ENCODE measurements at regions of chr1 and their contacts with region 1.

Region 1: GRCh38 chr1:110393691-110394564 is 3.1 kb upstream of the SLC16A4 start:
- DNase-seq: peak; percentile 66
- H3K4me3 ChIP-seq: no peak overlapping the region
- H3K27me3 ChIP-seq: no peaks in the 10 kb centered on the region
- CTCF ChIP-seq: no peak

Region 2: GRCh38 chr1:110293601-110294104 is 100.3 kb before region 1 on chr1:
- CTCF ChIA-PET with region 1: no interaction called
- POLR2A ChIA-PET with region 1: no interaction called
- DNase-seq: no peak
- H3K4me3 ChIP-seq: no peak overlapping the region
- H3K27me3 ChIP-seq: no peaks in the 10 kb centered on the region
- CTCF ChIP-seq: no peak

Region 3: GRCh38 chr1:110360431-110360830 is 33.5 kb before region 1 on chr1:
- CTCF ChIA-PET with region 1: no interaction called
- POLR2A ChIA-PET with region 1: interaction called, 11 read pairs
- DNase-seq: no peak
- H3K4me3 ChIP-seq: no peak overlapping the region
- H3K27me3 ChIP-seq: no peaks in the 10 kb centered on the region
- CTCF ChIP-seq: no peak

Region 4: GRCh38 chr1:110420874-110421793 is 27.2 kb after region 1 on chr1:
- CTCF ChIA-PET with region 1: no interaction called
- POLR2A ChIA-PET with region 1: no interaction called
- DNase-seq: no peak
- H3K4me3 ChIP-seq: no peak overlapping the region
- H3K27me3 ChIP-seq: peaks cover 4% of the 10 kb centered on the region
- CTCF ChIP-seq: no peak